ENCODE measurements at regions of chr10 and their contacts with region 1.

Region 1: GRCh38 chr10:8059959-8060703 is 5.6 kb downstream of the GATA3 start:
- DNase-seq: peak; percentile 70
- ATAC-seq: peak; percentile 58
- H3K4me3 Mint-ChIP-seq: peak overlapping the region; percentile 91
- H3K27ac Mint-ChIP-seq: peak overlapping the region; percentile 92
- H3K4me1 Mint-ChIP-seq: peaks cover 57% of the 10 kb centered on the region
- H3K27me3 Mint-ChIP-seq: no peaks in the 10 kb centered on the region

Region 2: GRCh38 chr10:8073691-8074391 is 13.7 kb after region 1 on chr10:
- POLR2A ChIA-PET with region 1: interaction called, 23 read pairs
- DNase-seq: no peak
- ATAC-seq: no peak
- H3K4me3 Mint-ChIP-seq: no peak overlapping the region
- H3K27ac Mint-ChIP-seq: peak overlapping the region; percentile 18
- H3K4me1 Mint-ChIP-seq: peaks cover 28% of the 10 kb centered on the region
- H3K27me3 Mint-ChIP-seq: no peaks in the 10 kb centered on the region

Region 3: GRCh38 chr10:8138471-8138870 is 78.3 kb after region 1 on chr10:
- POLR2A ChIA-PET with region 1: interaction called, 26 read pairs
- DNase-seq: no peak
- ATAC-seq: no peak
- H3K4me3 Mint-ChIP-seq: peak overlapping the region; percentile 88
- H3K27ac Mint-ChIP-seq: peak overlapping the region; percentile 97
- H3K4me1 Mint-ChIP-seq: peaks cover 36% of the 10 kb centered on the region
- H3K27me3 Mint-ChIP-seq: no peaks in the 10 kb centered on the region

Region 4: GRCh38 chr10:8404391-8405120 is 344.4 kb after region 1 on chr10:
- POLR2A ChIA-PET with region 1: interaction called, 26 read pairs
- DNase-seq: no peak
- ATAC-seq: peak; percentile 55
- H3K4me3 Mint-ChIP-seq: peak overlapping the region; percentile 82
- H3K27ac Mint-ChIP-seq: peak overlapping the region; percentile 90
- H3K4me1 Mint-ChIP-seq: peaks cover 55% of the 10 kb centered on the region
- H3K27me3 Mint-ChIP-seq: no peaks in the 10 kb centered on the region

Measured in activated naive CD8-positive, alpha-beta T cell treated with anti-CD3 and anti-CD28 coated beads, Interleukin-2, amount 10 ng/mL, durations not matched to agents 7 days and 5 days (primary cell).